Activated naive CD4-positive, alpha-beta T cell treated with anti-CD3 and anti-CD28 coated beads for 36 hours (primary cell): ENCODE measurements at regions of chr19 and their contacts with region 1.

Region 1: DNA sequence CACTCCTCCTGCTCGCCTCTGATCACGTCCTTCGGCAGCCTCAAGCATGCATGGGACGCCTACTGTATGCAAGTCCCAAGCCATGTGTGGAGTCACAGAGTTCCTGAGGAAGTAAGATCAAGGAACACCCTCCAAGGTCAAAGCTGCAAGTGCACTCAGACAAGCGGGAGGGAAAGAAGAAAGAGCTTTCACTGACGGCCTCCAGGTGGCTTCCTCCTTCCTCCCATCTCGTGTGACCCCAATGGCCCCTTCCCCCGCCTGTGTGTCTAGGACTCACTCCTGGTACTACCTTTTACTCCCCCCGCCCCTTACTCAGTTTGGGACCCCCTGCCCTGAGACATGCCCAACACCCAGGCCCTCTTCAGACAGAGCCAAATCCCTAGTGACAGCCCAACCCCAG is 6.0 kb downstream of the HAUS8 start:
- DNase-seq: no peak
- H3K4me3 Mint-ChIP-seq: no peak overlapping the region
- H3K27ac Mint-ChIP-seq: no peak overlapping the region
- H3K4me1 Mint-ChIP-seq: peaks cover 46% of the 10 kb centered on the region
- H3K27me3 Mint-ChIP-seq: no peaks in the 10 kb centered on the region

Region 2: DNA sequence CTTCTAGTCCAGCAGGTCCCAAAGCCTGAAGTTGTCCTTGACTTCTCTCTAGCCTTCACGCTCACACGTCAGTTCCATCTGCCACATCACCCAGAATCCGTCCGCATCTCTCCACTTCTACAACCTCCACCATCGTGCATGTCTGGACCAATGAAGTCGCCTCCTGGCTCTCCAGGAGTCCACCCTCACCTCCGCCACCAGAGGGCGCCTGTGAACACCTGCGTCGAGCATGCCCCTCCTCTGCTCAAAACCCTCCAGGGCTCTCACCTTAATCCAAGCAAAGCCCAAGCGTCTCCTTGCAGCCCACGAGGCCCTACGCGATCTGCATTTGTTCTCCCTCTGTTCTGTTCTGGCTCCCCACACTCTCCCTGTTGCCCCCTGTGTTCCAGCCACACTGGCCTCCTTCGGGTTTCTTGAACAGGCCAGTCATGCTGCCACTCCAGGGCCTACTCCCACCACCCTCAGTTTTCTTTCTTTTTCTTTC is 191.7 kb after region 1 on chr19:
- CTCF ChIA-PET with region 1: interaction called, 3 read pairs
- intact Hi-C with region 1: loop called (anchors 1 kb)
- DNase-seq: peak; percentile 95
- H3K4me3 Mint-ChIP-seq: no peak overlapping the region
- H3K27ac Mint-ChIP-seq: no peak overlapping the region
- H3K4me1 Mint-ChIP-seq: peaks cover 10% of the 10 kb centered on the region
- H3K27me3 Mint-ChIP-seq: no peaks in the 10 kb centered on the region